Activated B cell treated with CpG ODN at 0.5 μM for 24 hours (primary cell): ENCODE measurements at regions of chr6 and their contacts with region 1.

Region 1: GRCh38 chr6:26473758-26474438 is 16.1 kb downstream of the BTN2A1 start:
- DNase-seq: peak; percentile 49
- ATAC-seq: peak; percentile 94
- H3K4me3 Mint-ChIP-seq: peak overlapping the region; percentile 96
- H3K27ac Mint-ChIP-seq: peak overlapping the region; percentile 100
- H3K4me1 Mint-ChIP-seq: peaks cover 70% of the 10 kb centered on the region
- H3K27me3 Mint-ChIP-seq: no peaks in the 10 kb centered on the region
- CTCF ChIP-seq: no peak

Region 2: GRCh38 chr6:26329763-26330511 is 144.0 kb before region 1 on chr6:
- CTCF ChIA-PET with region 1: no interaction called
- POLR2A ChIA-PET with region 1: no interaction called
- intact Hi-C with region 1: no loop called
- DNase-seq: no peak
- ATAC-seq: peak; percentile 18
- H3K4me3 Mint-ChIP-seq: peak overlapping the region; percentile 41
- H3K27ac Mint-ChIP-seq: peak overlapping the region; percentile 65
- H3K4me1 Mint-ChIP-seq: peaks cover 25% of the 10 kb centered on the region
- H3K27me3 Mint-ChIP-seq: peaks cover 42% of the 10 kb centered on the region
- CTCF ChIP-seq: no peak

Region 3: GRCh38 chr6:26421259-26422144 is 52.4 kb before region 1 on chr6:
- CTCF ChIA-PET with region 1: no interaction called
- POLR2A ChIA-PET with region 1: interaction called, 4 read pairs
- intact Hi-C with region 1: loop called (anchors 1 kb)
- DNase-seq: peak; percentile 38
- ATAC-seq: peak; percentile 95
- H3K4me3 Mint-ChIP-seq: no peak overlapping the region
- H3K27ac Mint-ChIP-seq: peak overlapping the region; percentile 56
- H3K4me1 Mint-ChIP-seq: peaks cover 5% of the 10 kb centered on the region
- H3K27me3 Mint-ChIP-seq: no peaks in the 10 kb centered on the region
- CTCF ChIP-seq: no peak

Region 4: GRCh38 chr6:26457806-26458688 is 15.9 kb before region 1 on chr6 and contains the start of gene BTN2A1:
- CTCF ChIA-PET with region 1: interaction called, 4 read pairs
- POLR2A ChIA-PET with region 1: interaction called, 11 read pairs
- intact Hi-C with region 1: loop called (anchors 1 kb)
- DNase-seq: peak; percentile 49
- ATAC-seq: peak; percentile 98
- H3K4me3 Mint-ChIP-seq: peak within 1 kb of the TSS; percentile 98
- H3K27ac Mint-ChIP-seq: peak within 1 kb of the TSS; percentile 96
- H3K4me1 Mint-ChIP-seq: peaks cover 70% of the 10 kb centered on the region
- H3K27me3 Mint-ChIP-seq: no peaks in the 10 kb centered on the region
- CTCF ChIP-seq: no peak
- total RNA-seq, gene BTN2A1: 39.7 and 45.1 TPM in 2 replicates

Region 5: DNA sequence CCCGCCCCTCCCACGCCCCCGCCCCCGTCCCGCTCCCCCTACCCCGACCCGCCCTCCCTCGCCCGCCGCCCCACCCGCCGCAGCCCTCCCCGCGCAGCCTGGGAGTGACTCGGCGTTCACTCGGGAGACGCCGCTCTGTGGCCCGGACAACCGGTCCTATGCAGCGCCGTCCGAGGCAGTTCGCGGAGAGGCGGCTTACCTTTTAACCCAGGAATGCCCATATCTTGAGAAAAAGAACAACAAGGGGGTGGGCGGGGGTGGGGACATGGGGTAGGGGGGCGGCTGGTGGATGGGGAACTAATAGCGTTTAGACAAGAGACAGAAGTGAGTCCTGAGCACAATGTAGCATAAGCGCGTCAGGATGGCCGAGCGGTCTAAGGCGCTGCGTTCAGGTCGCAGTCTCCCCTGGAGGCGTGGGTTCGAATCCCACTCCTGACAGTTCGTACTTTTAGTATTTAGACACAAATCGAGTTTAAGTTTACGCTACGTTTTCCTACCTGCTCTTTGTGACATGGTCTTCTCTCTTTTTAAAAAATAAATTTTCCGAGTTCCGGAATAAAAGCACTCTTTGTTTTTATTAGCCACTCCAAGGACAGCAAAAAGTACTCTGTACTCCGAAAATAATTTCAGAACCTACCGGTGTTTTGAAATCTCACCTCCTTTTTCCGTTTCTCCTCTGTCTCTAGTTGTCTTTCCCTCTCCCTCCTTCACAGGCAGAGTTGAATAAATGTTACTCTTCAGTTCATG is 47.1 kb after region 1 on chr6:
- CTCF ChIA-PET with region 1: interaction called, 7 read pairs
- POLR2A ChIA-PET with region 1: interaction called, 60 read pairs
- intact Hi-C with region 1: loop called (anchors 1 kb)
- DNase-seq: peak; percentile 78
- ATAC-seq: peak; percentile 72
- H3K4me3 Mint-ChIP-seq: peak overlapping the region; percentile 87
- H3K27ac Mint-ChIP-seq: peak overlapping the region; percentile 92
- H3K4me1 Mint-ChIP-seq: peaks cover 43% of the 10 kb centered on the region
- H3K27me3 Mint-ChIP-seq: peaks cover 1% of the 10 kb centered on the region
- CTCF ChIP-seq: no peak

Region 6: GRCh38 chr6:26537846-26538571 is 64.1 kb after region 1 on chr6 and contains the start of gene HMGN4:
- CTCF ChIA-PET with region 1: no interaction called
- POLR2A ChIA-PET with region 1: interaction called, 60 read pairs
- intact Hi-C with region 1: loop called (anchors 1 kb)
- DNase-seq: peak; percentile 73
- ATAC-seq: peak; percentile 67
- H3K4me3 Mint-ChIP-seq: peak within 1 kb of the TSS; percentile 98
- H3K27ac Mint-ChIP-seq: peak within 1 kb of the TSS; percentile 97
- H3K4me1 Mint-ChIP-seq: peaks cover 65% of the 10 kb centered on the region
- H3K27me3 Mint-ChIP-seq: peaks cover 7% of the 10 kb centered on the region
- CTCF ChIP-seq: no peak
- total RNA-seq, gene HMGN4: 74.5 and 82.2 TPM in 2 replicates